ENCODE measurements at regions of chr21 and their contacts with region 1.

Region 1: DNA sequence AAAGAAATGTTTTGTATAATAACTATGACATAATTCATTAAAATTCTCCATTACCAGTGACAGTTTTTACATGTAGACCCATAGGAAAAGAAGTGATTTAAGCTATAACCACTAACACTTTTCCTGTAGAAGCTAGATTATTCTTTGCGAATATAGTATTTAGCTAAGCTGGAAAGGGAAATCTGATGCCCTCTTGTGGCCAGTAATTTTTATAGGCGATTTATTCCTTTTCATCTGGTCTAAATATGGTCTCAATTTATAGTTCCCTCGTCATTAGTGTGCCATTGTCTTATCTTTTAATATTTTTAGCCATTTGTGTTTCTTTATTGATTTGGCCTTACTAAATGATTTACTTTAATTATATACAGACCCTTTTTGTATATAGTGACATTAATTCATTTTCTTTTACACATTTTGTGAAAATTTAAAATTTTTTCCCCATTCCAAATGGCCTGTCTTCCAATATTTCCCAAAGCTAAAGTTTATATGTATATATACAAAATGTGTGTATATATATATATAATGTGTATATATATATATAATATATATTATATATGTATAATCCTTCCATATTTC is 26.7 kb downstream of the BTG3 start:
- H3K4me3 ChIP-seq: no peak overlapping the region
- H3K27ac ChIP-seq: no peak overlapping the region
- H3K4me1 ChIP-seq: no peaks in the 10 kb centered on the region
- CTCF ChIP-seq: no peak

Region 2: GRCh38 chr21:17451364-17451891 is 134.5 kb before region 1 on chr21:
- CTCF ChIA-PET with region 1: interaction called, 10 read pairs
- POLR2A ChIA-PET with region 1: no interaction called
- H3K4me3 ChIP-seq: no peak overlapping the region
- H3K27ac ChIP-seq: no peak overlapping the region
- H3K4me1 ChIP-seq: peaks cover 4% of the 10 kb centered on the region; the same call in 1 of the 2 replicates
- CTCF ChIP-seq: no peak

Region 3: GRCh38 chr21:17519208-17519738 is 66.7 kb before region 1 on chr21:
- CTCF ChIA-PET with region 1: interaction called, 11 read pairs
- POLR2A ChIA-PET with region 1: no interaction called
- H3K4me3 ChIP-seq: no peak overlapping the region
- H3K27ac ChIP-seq: no peak overlapping the region
- H3K4me1 ChIP-seq: peaks cover 10% of the 10 kb centered on the region
- CTCF ChIP-seq: no peak

Region 4: DNA sequence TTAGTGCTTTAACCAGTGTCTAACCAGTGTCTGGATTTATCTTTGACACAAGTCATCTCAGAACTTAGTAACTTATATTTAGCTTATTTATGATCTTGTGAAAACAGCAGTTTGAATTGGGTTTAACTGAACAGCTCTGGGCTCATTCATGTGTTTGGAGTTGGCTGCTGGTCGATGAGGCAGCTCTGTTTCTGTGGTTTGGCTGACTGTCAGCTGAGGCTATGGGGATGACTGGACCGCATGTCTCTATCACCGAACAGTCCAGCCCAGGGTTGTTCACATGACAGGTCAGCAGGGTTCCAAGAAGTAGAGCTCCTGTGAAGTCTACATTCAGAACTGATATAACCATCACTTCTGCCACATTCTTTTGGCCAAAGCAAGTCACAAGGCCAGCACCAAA is 262.3 kb after region 1 on chr21:
- CTCF ChIA-PET with region 1: no interaction called
- POLR2A ChIA-PET with region 1: no interaction called
- H3K4me3 ChIP-seq: no peak overlapping the region
- H3K27ac ChIP-seq: no peak overlapping the region
- H3K4me1 ChIP-seq: no peaks in the 10 kb centered on the region
- CTCF ChIP-seq: no peak

Measured in HEK293 (cell line).